ENCODE measurements at regions of chr3 and their contacts with region 1.

Region 1: DNA sequence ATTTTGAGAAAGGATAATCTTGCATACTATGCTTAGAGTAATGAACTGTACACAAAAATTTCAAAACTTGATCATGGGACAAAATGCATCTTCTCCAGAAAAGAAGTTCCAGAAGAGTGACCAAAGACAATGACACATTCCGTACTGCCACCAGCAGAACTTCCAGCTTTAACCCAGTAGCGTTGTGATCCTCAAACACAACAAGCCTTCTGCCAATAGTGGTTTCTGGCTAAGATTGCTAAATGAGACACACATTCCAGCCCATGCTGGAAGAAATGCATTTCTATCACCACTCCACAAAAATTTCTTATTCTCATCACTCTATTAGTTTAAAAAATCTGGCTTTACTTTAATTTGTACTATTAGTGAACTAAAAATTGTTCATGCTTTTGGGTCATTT is 334.9 kb downstream of the TBC1D5 start:
- DNase-seq: no peak
- H3K4me3 ChIP-seq: no peak overlapping the region
- H3K27ac ChIP-seq: no peak overlapping the region
- H3K4me1 ChIP-seq: no peaks in the 10 kb centered on the region
- H3K27me3 ChIP-seq: no peaks in the 10 kb centered on the region
- CTCF ChIP-seq: no peak
- POLR2A ChIP-seq: no peak

Region 2: GRCh38 chr3:17115186-17115585 is 292.4 kb before region 1 on chr3:
- intact Hi-C with region 1: no loop called
- DNase-seq: no peak
- H3K4me3 ChIP-seq: no peak overlapping the region
- H3K27ac ChIP-seq: no peak overlapping the region
- H3K4me1 ChIP-seq: no peaks in the 10 kb centered on the region
- H3K27me3 ChIP-seq: no peaks in the 10 kb centered on the region
- CTCF ChIP-seq: no peak
- POLR2A ChIP-seq: no peak

Region 3: GRCh38 chr3:17261633-17262369 is 145.8 kb before region 1 on chr3:
- intact Hi-C with region 1: loop called (anchors 5 to 10 kb)
- DNase-seq: no peak
- H3K4me3 ChIP-seq: no peak overlapping the region
- H3K27ac ChIP-seq: no peak overlapping the region
- H3K4me1 ChIP-seq: no peaks in the 10 kb centered on the region
- H3K27me3 ChIP-seq: no peaks in the 10 kb centered on the region
- CTCF ChIP-seq: no peak
- POLR2A ChIP-seq: no peak

Region 4: DNA sequence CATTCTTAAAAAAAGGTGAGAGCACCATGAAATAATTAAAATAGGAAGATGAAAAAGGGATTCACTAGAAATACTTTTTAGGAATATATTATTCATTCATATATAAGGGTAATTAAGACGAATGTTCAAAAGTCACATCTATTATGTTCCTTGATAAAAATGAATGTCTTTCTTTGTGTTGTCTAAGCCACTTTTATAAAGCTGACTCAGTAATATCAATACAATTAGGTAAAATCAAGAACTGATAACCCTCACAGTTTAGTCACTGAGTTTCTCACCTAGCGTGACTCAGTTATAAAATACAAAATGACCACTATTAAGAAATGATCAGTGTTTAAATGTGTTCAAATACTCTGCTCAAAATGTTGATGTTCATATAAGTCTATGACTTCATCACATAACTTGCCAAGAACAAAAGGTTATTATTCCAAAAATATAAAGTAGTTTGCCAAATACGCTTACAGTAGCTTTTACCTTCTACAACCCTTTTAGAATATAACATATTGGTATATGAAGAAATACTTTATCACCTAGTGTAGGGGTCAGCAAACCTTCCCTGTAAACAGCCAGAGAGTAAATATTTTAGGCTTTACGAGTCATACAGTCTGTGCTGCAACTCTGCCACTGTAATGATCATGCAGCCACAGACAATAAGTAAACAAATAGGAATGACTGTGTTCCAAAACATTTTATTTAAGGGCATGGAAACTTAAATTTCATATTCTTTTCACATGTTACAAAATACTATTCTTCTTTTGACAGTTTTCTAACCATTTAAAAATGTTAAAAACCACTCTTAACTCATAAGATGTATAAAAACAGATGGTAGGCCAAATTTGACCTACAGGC is 35.0 kb before region 1 on chr3:
- intact Hi-C with region 1: no loop called
- DNase-seq: no peak
- H3K4me3 ChIP-seq: no peak overlapping the region
- H3K27ac ChIP-seq: no peak overlapping the region
- H3K4me1 ChIP-seq: no peaks in the 10 kb centered on the region
- H3K27me3 ChIP-seq: no peaks in the 10 kb centered on the region
- CTCF ChIP-seq: no peak
- POLR2A ChIP-seq: no peak

Region 5: GRCh38 chr3:17765819-17766472 is 358.4 kb after region 1 on chr3:
- intact Hi-C with region 1: no loop called
- DNase-seq: no peak
- H3K4me3 ChIP-seq: no peak overlapping the region
- H3K27ac ChIP-seq: no peak overlapping the region
- H3K4me1 ChIP-seq: no peaks in the 10 kb centered on the region
- H3K27me3 ChIP-seq: no peaks in the 10 kb centered on the region
- CTCF ChIP-seq: no peak
- POLR2A ChIP-seq: no peak